K562 (cell line): ENCODE measurements at regions of chr3 and their contacts with region 1.

Region 1: GRCh38 chr3:49471856-49472495 is 1.9 kb downstream of the DAG1 start:
- DNase-seq: peak in 2 of 4 experiments; percentile 54 to 81
- ATAC-seq: no peak
- H3K4me3 ChIP-seq: peak overlapping the region; percentile 92
- H3K27ac ChIP-seq: peak overlapping the region; percentile 85
- H3K4me1 ChIP-seq: peaks cover 20 to 29% of the 10 kb centered on the region in 2 experiments
- H3K27me3 ChIP-seq: no peaks in the 10 kb centered on the region
- CTCF ChIP-seq: no peak
- EP300 ChIP-seq: no peak; the same call in 1 of the 2 replicates
- POLR2A ChIP-seq: no peak
- RAD21 ChIP-seq: no peak

Region 2: DNA sequence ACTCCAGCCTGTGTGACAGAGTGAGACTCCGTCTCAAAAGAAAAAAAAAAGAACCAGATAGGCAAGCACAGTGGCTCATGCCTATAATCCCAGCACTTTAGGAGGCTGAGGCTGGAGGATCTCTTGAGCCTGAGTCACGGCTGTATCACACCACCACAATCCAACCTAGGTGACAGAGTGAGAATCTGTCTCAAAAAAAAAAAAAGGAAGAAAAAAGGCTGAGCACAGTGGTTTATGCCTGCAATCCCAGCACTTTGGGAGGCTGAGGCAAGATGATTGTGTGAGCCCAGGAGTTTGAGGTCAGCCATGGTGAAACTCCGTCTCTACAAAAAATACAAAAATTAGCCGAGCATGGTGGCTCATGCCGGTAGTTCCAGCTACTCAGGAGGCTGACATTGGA is 37.2 kb before region 1 on chr3:
- CTCF ChIA-PET with region 1: no interaction called
- POLR2A ChIA-PET with region 1: no interaction called
- in situ Hi-C with region 1: no loop called
- intact Hi-C with region 1: no loop called
- DNase-seq: no peak
- ATAC-seq: no peak
- H3K4me3 ChIP-seq: no peak overlapping the region
- H3K27ac ChIP-seq: no peak overlapping the region
- H3K4me1 ChIP-seq: no peaks in the 10 kb centered on the region; a peak in 2 of 5 replicates
- H3K27me3 ChIP-seq: no peaks in the 10 kb centered on the region
- CTCF ChIP-seq: no peak
- EP300 ChIP-seq: no peak
- POLR2A ChIP-seq: no peak
- RAD21 ChIP-seq: no peak

Region 3: DNA sequence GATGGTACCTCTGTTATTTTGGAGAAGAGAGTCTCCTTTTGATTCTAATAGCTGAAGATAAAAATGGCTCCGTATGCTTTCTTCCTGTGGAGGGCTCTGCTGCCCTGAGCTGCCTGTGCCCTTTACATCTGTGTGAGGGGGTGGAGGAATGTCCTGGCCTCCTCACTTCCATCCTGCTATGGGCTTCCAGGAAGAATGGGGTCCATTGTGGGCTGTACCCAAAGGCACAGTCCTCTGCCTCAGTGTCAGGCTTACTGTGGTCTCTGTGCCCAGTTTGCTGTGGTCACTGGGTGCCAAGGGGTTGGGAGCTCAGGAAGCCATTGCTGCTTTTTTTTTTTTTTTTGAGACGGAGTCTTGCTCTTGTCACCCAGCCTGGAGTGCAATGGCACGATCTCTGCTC is 12.5 kb after region 1 on chr3:
- CTCF ChIA-PET with region 1: no interaction called
- POLR2A ChIA-PET with region 1: interaction called, 10 read pairs
- in situ Hi-C with region 1: no loop called
- intact Hi-C with region 1: no loop called
- DNase-seq: no peak
- ATAC-seq: no peak
- H3K4me3 ChIP-seq: no peak overlapping the region
- H3K27ac ChIP-seq: no peak overlapping the region
- H3K4me1 ChIP-seq: no peaks in the 10 kb centered on the region
- H3K27me3 ChIP-seq: no peaks in the 10 kb centered on the region
- CTCF ChIP-seq: no peak
- EP300 ChIP-seq: no peak
- POLR2A ChIP-seq: no peak
- RAD21 ChIP-seq: no peak

Region 4: GRCh38 chr3:49656541-49657112 is 184.7 kb after region 1 on chr3:
- CTCF ChIA-PET with region 1: no interaction called
- POLR2A ChIA-PET with region 1: no interaction called
- in situ Hi-C with region 1: no loop called
- intact Hi-C with region 1: no loop called
- DNase-seq: peak in 3 of 4 experiments; percentile 19 to 28 (median 21)
- ATAC-seq: peak; percentile 83
- H3K4me3 ChIP-seq: no peak overlapping the region
- H3K27ac ChIP-seq: no peak overlapping the region
- H3K4me1 ChIP-seq: peaks cover 0 to 32% of the 10 kb centered on the region in 2 experiments; a peak in 2 of 5 replicates
- H3K27me3 ChIP-seq: no peaks in the 10 kb centered on the region
- CTCF ChIP-seq: peak; percentile 36 to 58 (median 46); a peak in 5 of 6 replicates
- EP300 ChIP-seq: no peak
- POLR2A ChIP-seq: no peak
- RAD21 ChIP-seq: peak in 1 of 2 experiments; percentile 63; a peak in 2 of 4 replicates